SK-N-SH (cell line): ENCODE measurements at regions of chr2 and their contacts with region 1.

Region 1: DNA sequence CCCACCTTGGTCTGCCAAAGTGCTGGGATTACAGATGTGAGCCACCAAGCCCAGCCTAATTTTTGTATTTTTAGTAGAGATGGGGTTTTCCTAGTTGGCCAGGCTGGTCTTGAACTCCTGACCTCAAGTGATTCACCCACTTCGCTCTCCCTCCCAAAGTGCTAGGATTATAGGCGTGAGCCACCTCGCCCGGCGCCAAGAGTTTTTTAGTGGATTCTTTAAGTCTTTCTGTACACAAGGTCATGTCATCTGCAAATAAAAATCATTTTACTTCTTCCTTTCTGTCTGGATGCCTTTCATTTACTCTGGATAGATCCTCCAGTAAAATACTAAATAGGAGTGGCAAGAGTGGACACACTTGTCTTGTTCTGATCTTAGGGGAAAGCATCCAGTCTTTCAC is 61.7 kb downstream of the KCMF1 start:
- DNase-seq: no peak
- H3K4me3 ChIP-seq: no peak overlapping the region
- H3K27ac ChIP-seq: no peak overlapping the region
- H3K4me1 ChIP-seq: peaks cover 0 to 12% of the 10 kb centered on the region in 2 experiments; a peak in 2 of 4 replicates
- H3K27me3 ChIP-seq: no peaks in the 10 kb centered on the region
- CTCF ChIP-seq: no peak
- EP300 ChIP-seq: no peak
- RAD21 ChIP-seq: no peak

Region 2: GRCh38 chr2:85017411-85018048 is 15.1 kb before region 1 on chr2:
- CTCF ChIA-PET with region 1: interaction called, 17 read pairs
- POLR2A ChIA-PET with region 1: no interaction called
- DNase-seq: peak; percentile 21
- H3K4me3 ChIP-seq: no peak overlapping the region; a peak in 1 of 4 replicates
- H3K27ac ChIP-seq: peak overlapping the region; percentile 23 to 35; a peak in 3 of 4 replicates
- H3K4me1 ChIP-seq: peaks cover 0 to 52% of the 10 kb centered on the region in 2 experiments; a peak in 3 of 4 replicates
- H3K27me3 ChIP-seq: no peaks in the 10 kb centered on the region
- CTCF ChIP-seq: peak; percentile 68
- EP300 ChIP-seq: no peak
- RAD21 ChIP-seq: peak; percentile 25; the same call in 1 of the 2 replicates